Endothelial cell of umbilical vein (primary cell): ENCODE measurements at regions of chr1 and their contacts with region 1.

Region 1: GRCh38 chr1:205284343-205285144 is 37.0 kb downstream of the NUAK2 start:
- DNase-seq: peak; percentile 95
- H3K4me3 ChIP-seq: no peak overlapping the region
- H3K27ac ChIP-seq: peak overlapping the region; percentile 45
- H3K4me1 ChIP-seq: peaks cover 34% of the 10 kb centered on the region
- H3K27me3 ChIP-seq: no peaks in the 10 kb centered on the region
- CTCF ChIP-seq: peak in 1 of 2 donors; percentile 9
- POLR2A ChIP-seq: peak; percentile 33

Region 2: GRCh38 chr1:205313563-205314308 is 29.2 kb after region 1 on chr1:
- CTCF ChIA-PET with region 1: interaction called, 1,536 read pairs
- POLR2A ChIA-PET with region 1: interaction called, 6 read pairs
- dilution Hi-C with region 1: no loop called
- intact Hi-C with region 1: loop called (anchors 1 kb)
- DNase-seq: peak; percentile 67
- H3K4me3 ChIP-seq: no peak overlapping the region
- H3K27ac ChIP-seq: peak overlapping the region; percentile 55
- H3K4me1 ChIP-seq: peaks cover 18% of the 10 kb centered on the region
- H3K27me3 ChIP-seq: no peaks in the 10 kb centered on the region
- CTCF ChIP-seq: no peak
- POLR2A ChIP-seq: no peak

Region 3: GRCh38 chr1:205335643-205336091 is 51.1 kb after region 1 on chr1:
- CTCF ChIA-PET with region 1: interaction called, 1,536 read pairs
- POLR2A ChIA-PET with region 1: no interaction called
- dilution Hi-C with region 1: no loop called
- intact Hi-C with region 1: loop called (anchors 1 kb)
- DNase-seq: peak; percentile 85
- H3K4me3 ChIP-seq: no peak overlapping the region
- H3K27ac ChIP-seq: no peak overlapping the region
- H3K4me1 ChIP-seq: no peaks in the 10 kb centered on the region
- H3K27me3 ChIP-seq: peaks cover 8 to 14% of the 10 kb centered on the region in 2 experiments
- CTCF ChIP-seq: peak; percentile 97
- POLR2A ChIP-seq: no peak

Region 4: GRCh38 chr1:205645519-205645918 is 361.0 kb after region 1 on chr1:
- CTCF ChIA-PET with region 1: no interaction called
- POLR2A ChIA-PET with region 1: no interaction called
- dilution Hi-C with region 1: no loop called
- intact Hi-C with region 1: no loop called
- DNase-seq: no peak
- H3K4me3 ChIP-seq: no peak overlapping the region
- H3K27ac ChIP-seq: no peak overlapping the region
- H3K4me1 ChIP-seq: no peaks in the 10 kb centered on the region
- H3K27me3 ChIP-seq: no peaks in the 10 kb centered on the region
- CTCF ChIP-seq: no peak
- POLR2A ChIP-seq: no peak